MCF 10A (cell line): ENCODE measurements at regions of chr9 and their contacts with region 1.

Region 1: DNA sequence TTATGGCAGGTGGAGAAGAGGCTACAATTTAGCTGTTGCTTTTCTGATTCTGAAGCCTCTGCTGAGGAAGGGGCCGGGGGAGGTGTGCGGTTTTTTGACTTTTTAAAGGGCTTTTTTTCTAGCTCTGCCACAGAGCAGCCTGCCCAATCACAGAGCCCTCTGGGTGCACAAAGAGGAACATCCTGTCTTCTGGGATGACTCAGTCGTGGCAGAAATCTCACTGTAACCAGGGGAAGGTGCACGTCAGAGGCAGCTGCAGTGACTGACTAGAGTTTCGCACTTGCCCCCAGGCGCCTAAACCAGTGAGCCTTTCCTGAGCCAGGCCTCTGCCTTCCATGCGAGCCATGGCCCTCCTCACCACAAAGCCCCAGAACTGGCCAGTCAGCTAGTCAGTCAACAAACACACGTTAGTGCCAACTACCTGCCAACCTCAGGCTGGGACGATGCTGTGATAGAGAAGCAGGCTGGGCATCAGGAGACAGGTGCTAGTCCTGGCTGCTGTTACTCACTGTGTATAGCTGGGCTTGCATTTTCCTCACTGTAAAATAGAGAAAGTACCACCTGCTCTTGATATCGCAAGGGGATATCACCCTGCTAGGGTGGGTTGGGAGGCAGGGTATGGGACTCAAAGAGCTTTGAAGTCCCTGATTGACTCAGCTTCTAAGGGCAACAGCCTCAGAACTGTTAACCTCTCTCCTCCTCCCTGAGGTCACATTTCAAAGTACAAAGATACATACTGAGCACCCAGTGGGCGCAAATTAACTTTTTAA is 2.2 kb downstream of the AKNA start:
- DNase-seq: peak; percentile 98
- H3K4me3 Mint-ChIP-seq: no peak overlapping the region
- H3K27ac Mint-ChIP-seq: peak overlapping the region; percentile 93
- H3K4me1 Mint-ChIP-seq: peaks cover 24% of the 10 kb centered on the region
- H3K27me3 Mint-ChIP-seq: no peaks in the 10 kb centered on the region
- CTCF ChIP-seq: no peak

Region 2: DNA sequence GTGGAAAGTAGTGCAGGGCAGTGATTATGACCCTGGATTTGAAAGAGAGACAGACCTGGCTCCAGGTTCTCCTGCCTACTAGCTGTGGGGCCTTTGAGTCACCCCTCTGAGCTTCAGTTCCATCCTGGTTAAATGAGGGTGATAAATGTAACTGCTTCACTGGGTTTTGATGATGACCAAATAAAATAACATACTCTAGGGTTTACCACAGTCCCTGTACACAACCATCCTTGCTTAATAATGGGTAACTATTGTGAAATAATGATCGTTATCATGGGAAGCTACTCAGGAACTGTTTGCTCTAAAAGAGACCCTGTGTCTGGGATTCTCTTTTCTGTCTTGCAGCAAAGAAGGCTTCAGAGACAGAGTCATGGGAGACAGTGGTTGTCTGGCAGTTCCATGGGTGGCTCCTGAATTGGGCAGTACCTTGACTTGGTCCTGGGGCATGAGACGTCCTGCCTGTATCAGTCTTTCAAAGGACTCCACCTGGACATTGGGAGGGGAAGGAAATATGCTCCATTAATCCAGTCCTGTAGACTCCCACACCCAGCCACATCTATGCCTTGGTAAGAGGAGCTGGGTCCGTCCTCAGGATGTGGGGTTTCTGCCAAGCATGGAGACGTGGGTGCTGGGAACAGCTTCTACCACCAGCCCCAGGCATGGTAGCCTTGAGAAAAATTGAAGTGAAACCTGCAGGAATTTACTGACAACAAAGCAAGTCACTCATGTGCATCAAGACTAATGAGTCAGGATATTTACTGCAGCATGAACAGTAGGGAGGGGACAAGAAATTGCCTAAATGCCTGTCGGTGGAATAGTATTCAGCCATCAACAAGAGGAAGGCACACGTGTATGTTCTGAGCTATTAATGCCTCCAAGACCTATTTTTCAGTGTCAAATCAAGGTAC is 21.2 kb before region 1 on chr9:
- CTCF ChIA-PET with region 1: interaction called, 4 read pairs
- POLR2A ChIA-PET with region 1: interaction called, 11 read pairs
- intact Hi-C with region 1: no loop called
- DNase-seq: peak; percentile 86
- H3K4me3 Mint-ChIP-seq: peak overlapping the region; percentile 25
- H3K27ac Mint-ChIP-seq: peak overlapping the region; percentile 80
- H3K4me1 Mint-ChIP-seq: peaks cover 27% of the 10 kb centered on the region
- H3K27me3 Mint-ChIP-seq: no peaks in the 10 kb centered on the region
- CTCF ChIP-seq: no peak

Region 3: DNA sequence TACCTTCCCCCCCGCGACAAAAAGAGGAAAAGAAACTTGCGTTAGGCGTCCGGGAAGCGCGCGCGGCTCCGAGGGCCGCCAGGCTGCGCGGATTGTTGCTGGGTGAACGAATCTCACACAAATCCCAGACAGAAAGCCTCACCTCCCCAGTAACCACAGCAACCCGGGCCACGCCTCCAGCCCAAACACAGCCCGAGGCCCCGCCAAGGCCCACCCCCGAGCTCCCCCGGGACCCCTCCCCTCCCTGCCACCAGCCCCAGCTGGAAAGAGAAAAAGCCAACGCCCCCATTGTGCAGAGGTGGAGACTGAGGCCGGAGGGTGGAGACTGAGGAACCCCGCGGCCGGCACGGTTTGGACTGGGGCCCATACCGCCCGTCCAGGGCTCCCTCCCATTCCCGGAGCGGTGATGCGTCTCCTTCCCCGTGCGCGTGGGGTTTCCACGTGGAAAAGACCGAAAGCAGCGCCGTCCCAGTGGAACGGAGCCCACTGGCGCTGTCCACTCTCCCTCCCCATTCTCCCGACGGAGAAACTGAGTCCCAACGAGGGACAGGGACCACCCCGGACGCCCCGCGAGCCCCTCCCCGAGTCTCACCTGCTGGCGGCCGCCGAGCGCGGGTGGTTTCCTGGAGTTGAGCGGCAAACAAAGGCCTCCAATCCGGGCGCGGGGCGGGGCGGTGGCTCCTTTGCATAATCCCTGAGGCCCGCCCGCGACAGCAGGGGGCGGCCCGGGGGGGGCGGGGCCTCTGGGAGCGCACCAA is 12.4 kb after region 1 on chr9:
- CTCF ChIA-PET with region 1: interaction called, 6 read pairs
- POLR2A ChIA-PET with region 1: interaction called, 10 read pairs
- intact Hi-C with region 1: no loop called
- DNase-seq: peak; percentile 96
- H3K4me3 Mint-ChIP-seq: peak overlapping the region; percentile 81
- H3K27ac Mint-ChIP-seq: peak overlapping the region; percentile 90
- H3K4me1 Mint-ChIP-seq: peaks cover 9% of the 10 kb centered on the region
- H3K27me3 Mint-ChIP-seq: no peaks in the 10 kb centered on the region
- CTCF ChIP-seq: peak; percentile 5